Aorta (tissue), 5 donors: ENCODE measurements at regions of chr2 and their contacts with region 1.

Region 1: GRCh38 chr2:157125190-157125589 is 132.3 kb upstream of the GALNT5 start:
- DNase-seq: no peak
- ATAC-seq: no peak
- H3K4me3 ChIP-seq: no peak overlapping the region
- H3K27ac ChIP-seq: no peak overlapping the region
- H3K4me1 ChIP-seq: no peaks in the 10 kb centered on the region
- H3K27me3 ChIP-seq: no peaks in the 10 kb centered on the region

Region 2: GRCh38 chr2:157196956-157197355 is 71.8 kb after region 1 on chr2:
- intact Hi-C with region 1: no loop called
- DNase-seq: no peak
- ATAC-seq: no peak
- H3K4me3 ChIP-seq: no peak overlapping the region
- H3K27ac ChIP-seq: no peak overlapping the region
- H3K4me1 ChIP-seq: no peaks in the 10 kb centered on the region
- H3K27me3 ChIP-seq: no peaks in the 10 kb centered on the region

Region 3: GRCh38 chr2:157283468-157283867 is 158.3 kb after region 1 on chr2:
- intact Hi-C with region 1: no loop called
- DNase-seq: no peak
- ATAC-seq: no peak
- H3K4me3 ChIP-seq: no peak overlapping the region
- H3K27ac ChIP-seq: no peak overlapping the region
- H3K4me1 ChIP-seq: no peaks in the 10 kb centered on the region
- H3K27me3 ChIP-seq: no peaks in the 10 kb centered on the region

Region 4: DNA sequence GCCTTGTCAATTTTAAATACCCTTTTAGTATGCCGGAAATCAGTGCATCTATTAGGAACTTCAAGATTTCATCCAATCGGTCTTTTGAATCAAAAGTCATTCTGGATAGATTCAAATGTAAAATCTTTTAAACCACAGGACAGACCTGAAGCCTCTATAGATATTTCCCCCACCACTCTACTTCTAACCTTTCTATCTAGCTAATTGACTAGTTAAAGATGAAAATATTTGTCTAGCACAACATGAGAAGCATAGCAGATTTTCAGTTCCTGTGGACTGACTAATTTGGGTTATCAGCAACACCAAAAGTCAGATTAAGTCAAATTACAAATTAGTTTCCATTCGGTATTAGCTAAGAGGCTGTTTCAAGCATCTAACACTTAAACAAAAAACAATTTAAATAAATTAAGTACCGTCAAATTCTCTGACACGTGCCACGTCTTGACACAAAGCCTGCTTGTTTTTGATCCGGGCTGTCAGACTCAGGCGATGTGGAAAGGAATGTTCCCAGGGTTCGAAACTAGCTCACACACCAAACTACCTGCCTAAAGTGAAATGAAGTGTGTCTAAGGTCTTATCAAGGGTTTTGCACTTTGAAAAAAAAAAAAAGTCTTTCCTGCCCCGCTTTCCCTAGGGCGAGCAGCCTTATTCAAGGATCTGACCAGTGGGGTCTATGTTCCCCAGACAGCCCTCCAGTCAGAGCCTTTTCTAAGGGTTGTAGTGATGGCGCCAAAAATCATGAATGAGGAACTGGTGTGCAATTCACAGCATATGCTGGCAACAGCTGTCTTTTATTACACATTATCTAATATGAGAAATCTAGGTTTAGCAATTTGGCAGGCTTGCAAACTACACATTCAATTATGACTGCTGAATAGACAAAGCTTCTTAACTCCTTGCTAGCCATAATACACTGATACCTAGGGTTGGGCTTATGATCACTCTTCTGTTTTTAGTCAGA is 314.0 kb after region 1 on chr2:
- intact Hi-C with region 1: no loop called
- DNase-seq: no peak
- ATAC-seq: no peak
- H3K4me3 ChIP-seq: no peak overlapping the region
- H3K27ac ChIP-seq: no peak overlapping the region
- H3K4me1 ChIP-seq: peaks cover 0 to 4% of the 10 kb centered on the region in 2 donors
- H3K27me3 ChIP-seq: no peaks in the 10 kb centered on the region

Region 5: DNA sequence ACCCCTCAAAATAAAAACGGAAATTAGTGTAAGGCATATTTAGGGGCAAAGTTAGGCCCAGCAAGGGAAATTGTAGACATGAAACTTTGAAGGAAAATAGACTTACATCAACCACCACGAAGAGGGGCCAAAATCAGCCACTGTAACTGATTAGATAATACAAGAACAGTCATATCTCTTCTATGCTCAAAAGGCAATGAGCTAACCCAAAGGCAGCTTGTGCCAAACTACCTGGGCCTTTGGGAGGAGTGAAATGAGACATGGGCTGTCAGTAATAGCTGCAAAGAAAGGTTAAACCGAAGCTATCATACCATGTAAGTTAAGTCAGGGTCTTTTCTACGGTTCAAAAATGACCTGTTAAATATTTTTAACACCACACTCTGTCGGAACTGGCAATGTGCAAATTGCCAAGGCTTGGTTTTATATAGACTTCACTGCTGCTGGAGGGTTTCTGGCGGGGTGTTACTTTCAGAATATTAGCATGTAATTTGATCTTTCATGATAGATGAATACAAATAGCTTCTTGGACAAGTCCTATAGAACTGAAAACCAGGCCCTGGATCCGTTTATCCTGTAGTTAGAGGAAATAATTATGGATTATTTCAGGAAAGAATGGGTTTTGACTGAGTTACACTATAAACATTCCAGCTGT is 681.4 kb after region 1 on chr2:
- intact Hi-C with region 1: no loop called
- DNase-seq: no peak
- ATAC-seq: no peak
- H3K4me3 ChIP-seq: no peak overlapping the region
- H3K27ac ChIP-seq: no peak overlapping the region
- H3K4me1 ChIP-seq: peaks cover 4 to 10% of the 10 kb centered on the region in 2 donors
- H3K27me3 ChIP-seq: no peaks in the 10 kb centered on the region

Region 6: DNA sequence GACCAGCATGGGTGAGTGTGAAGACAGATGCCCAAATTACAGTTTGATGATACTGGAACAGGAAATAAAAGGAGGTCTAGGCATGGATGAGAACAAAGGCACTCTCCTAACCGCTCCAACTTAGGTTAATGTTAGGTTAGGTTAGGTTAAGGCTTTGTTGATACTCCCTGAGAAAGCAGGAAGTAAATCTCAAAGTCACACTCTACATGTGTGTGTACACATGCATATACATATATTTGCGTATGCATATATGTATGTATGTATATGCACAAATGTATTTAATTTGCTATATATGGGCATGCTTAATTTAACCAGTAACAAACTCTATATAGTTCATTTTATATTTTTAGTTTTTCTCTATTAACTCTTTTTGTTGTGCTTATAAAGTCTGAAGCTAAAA is 1115.8 kb after region 1 on chr2:
- intact Hi-C with region 1: loop called in 1 of 2 experiments (anchors 10 kb)
- DNase-seq: no peak
- ATAC-seq: no peak
- H3K4me3 ChIP-seq: no peak overlapping the region
- H3K27ac ChIP-seq: no peak overlapping the region
- H3K4me1 ChIP-seq: no peaks in the 10 kb centered on the region
- H3K27me3 ChIP-seq: no peaks in the 10 kb centered on the region